Right ventricle myocardium superior (tissue), 1 donor: ENCODE measurements at regions of chr13 and their contacts with region 1.

Region 1: DNA sequence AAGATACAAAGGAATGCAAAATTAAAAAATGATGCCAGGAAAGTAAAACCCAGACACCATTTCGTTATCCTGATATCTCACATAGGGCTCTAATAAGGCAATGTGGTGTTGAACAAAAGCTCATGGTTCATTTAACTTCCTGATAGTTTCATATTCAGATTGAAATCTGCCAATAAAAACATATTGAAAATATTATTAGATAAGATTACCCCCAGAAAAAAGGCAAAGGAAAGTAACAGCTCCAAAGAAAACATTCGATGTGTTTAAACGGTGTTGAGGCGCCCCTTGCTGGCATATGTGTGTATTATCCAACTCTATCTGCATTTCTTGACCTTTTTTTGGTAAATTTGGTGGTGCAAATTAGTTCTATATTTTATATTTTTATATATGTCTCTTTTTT is 75.9 kb downstream of the ESD start:
- DNase-seq: no peak
- ATAC-seq: peak; percentile 83

Region 2: GRCh38 chr13:46492946-46493345 is 228.1 kb before region 1 on chr13:
- intact Hi-C with region 1: loop called (anchors 1 kb)
- DNase-seq: no peak
- ATAC-seq: peak; percentile 43

Region 3: DNA sequence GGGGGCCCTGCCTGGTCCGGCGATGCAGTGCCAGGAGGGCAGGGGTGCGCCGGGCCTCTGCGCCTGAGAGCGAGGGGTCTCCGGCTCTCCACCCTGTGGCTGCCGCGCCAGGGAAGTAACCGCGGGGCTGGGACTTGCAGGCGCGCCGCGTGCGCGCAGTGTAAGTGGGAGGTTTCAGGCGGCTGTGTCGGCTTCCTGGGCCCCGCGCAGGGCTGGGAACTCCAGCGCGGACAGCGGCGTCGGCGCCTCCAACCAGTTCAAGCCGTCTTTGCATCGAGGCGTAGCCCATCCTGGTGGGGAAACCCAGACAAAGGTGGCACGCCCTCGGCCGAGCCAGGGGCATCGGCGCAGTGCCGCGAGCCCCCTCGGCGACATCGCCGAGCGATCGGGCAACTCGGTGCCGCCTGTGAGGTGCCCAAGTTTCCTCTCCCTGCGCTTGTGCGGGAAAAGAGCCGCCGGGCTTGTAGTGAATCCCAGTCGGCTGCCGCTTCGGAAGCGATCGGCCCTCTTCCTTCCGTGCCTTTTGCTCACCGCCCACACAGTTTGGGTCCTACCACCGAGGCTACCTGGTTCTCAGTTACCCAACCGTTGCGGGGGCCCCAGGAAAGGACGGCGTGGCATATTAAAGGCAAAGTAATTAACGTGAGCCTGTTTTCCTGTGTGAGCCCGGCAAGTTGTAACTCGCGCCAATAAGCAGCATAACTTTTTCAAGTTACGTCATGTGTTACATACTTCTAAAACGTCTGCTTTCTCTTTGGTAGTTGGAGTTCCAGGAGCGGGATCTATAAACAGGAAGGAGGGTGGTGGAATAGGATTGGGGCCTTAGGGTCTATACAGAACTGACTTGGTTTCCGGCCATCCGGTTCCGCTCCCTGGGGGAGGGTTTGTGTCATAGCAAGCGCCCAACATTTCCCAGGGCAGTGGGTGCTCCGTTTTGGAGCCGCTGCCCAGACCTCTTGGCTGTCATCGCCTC is 166.9 kb before region 1 on chr13:
- intact Hi-C with region 1: loop called (anchors 5 kb)
- DNase-seq: peak; percentile 83
- ATAC-seq: peak; percentile 82